Esophagus muscularis mucosa (tissue), 4 donors: ENCODE measurements at regions of chr12 and their contacts with region 1.

Region 1: DNA sequence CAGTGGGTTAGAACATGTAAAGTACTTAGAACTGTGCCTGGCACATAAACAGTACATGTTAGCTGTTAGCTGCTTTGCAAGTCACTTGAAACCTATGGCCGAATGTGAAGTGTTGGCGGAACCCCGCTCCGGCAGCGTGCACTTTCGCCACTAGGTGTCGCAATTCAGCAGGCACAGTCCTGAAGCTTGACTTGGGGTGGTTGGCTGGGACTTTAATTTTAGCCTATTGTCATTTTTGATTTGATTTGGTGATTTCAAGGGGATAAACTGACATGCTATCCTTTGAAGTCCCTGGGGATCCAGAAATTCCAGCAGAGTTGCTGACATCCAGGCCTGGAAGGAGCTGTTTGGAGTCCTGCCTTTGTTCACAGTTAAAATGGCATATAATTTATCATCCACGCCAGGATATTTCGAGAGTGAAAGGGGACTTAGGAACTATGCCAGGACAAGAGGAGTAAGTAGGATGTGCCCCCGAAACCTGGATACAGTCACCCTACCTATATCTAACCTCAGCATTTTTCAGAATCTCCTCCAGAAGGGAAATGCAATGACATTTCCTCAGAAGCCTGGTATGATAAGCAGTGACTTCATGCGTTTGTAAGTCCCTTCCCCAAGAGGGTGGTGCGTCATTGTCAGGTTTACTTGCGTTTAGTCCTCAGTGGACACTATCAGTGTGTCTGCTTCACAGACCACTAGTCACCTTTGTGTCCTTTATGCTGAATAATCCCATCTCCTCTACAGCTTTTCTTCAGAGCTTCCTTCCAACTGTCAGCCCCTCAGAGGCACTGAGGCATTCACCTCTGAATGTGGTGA is 3.5 kb upstream of the TSPAN9 start:
- DNase-seq: peak; percentile 95
- H3K4me3 ChIP-seq: no peak overlapping the region
- H3K27ac ChIP-seq: peak overlapping the region in 1 of 4 donors; percentile 43
- H3K4me1 ChIP-seq: peaks cover 27 to 34% (median 31%) of the 10 kb centered on the region in 4 donors
- H3K27me3 ChIP-seq: no peaks in the 10 kb centered on the region
- CTCF ChIP-seq: peak; percentile 95 to 99 (median 96)
- EP300 ChIP-seq: no peak
- POLR2A ChIP-seq: no peak

Region 2: DNA sequence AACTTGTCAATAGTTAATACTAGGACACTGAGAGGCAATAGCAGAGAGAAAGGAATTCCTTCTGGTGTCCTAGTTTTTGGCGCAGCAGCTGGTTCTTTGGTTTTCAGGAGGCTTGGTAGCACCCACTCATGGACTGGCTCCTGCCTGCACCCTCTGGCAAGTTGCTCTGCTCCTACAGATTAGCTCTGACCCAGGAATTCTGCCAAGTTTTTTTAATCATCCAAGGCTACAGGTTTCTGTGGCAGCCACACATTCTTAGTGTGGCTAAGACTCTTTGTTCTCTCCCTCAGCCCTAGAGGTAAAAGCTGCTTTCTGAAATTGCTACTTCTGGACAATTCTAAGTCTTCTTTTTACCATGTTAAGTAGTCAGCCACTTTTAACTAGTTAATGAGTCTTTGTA is 350.8 kb before region 1 on chr12:
- intact Hi-C with region 1: no loop called
- DNase-seq: no peak
- H3K4me3 ChIP-seq: no peak overlapping the region
- H3K27ac ChIP-seq: no peak overlapping the region
- H3K4me1 ChIP-seq: no peaks in the 10 kb centered on the region
- H3K27me3 ChIP-seq: peaks cover 0 to 13% (median 0%) of the 10 kb centered on the region in 4 donors
- CTCF ChIP-seq: no peak
- EP300 ChIP-seq: no peak
- POLR2A ChIP-seq: no peak

Region 3: DNA sequence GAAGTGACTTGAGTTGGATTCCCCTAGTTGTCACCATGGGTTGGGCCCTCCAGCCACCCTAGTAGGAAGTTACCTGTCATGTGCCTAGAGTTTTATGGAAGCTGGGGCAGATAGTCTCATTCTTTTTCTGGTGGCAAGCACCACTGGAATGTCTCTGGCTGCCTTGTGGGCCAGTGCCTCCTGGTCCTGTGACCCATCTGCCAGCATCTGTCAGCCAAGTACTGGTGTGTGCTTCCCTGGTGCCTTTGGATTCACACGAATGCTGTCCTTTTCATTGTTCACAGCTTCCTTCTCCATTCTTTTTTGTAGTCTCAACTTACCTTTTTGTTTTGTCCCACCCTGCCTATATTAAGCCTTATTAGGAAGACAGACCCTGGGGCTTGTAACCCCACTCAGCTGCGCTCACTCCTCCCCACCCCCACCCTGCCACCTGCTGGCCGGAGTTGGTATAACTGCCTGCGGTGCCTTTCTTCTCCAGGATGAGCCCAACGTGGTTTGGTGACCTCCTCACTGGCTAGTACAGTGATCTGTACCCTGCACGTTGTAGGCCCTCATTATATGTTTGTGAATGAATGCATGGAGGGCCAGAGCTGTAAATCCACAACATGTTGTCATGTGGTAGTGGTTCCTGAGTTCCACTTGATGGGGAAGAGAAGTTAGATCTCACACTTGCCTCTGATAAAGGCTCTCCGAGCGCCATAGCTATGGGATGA is 129.2 kb after region 1 on chr12:
- intact Hi-C with region 1: loop called (anchors 5 kb)
- DNase-seq: no peak
- H3K4me3 ChIP-seq: no peak overlapping the region
- H3K27ac ChIP-seq: no peak overlapping the region
- H3K4me1 ChIP-seq: peaks cover 50 to 69% (median 62%) of the 10 kb centered on the region in 4 donors
- H3K27me3 ChIP-seq: peaks cover 0 to 19% (median 0%) of the 10 kb centered on the region in 4 donors
- CTCF ChIP-seq: peak; percentile 83 to 98 (median 84)
- EP300 ChIP-seq: no peak
- POLR2A ChIP-seq: no peak

Region 4: GRCh38 chr12:3275171-3276041 is 201.8 kb after region 1 on chr12:
- intact Hi-C with region 1: loop called (anchors 2 kb)
- DNase-seq: no peak
- H3K4me3 ChIP-seq: no peak overlapping the region
- H3K27ac ChIP-seq: no peak overlapping the region
- H3K4me1 ChIP-seq: peaks cover 17 to 40% (median 35%) of the 10 kb centered on the region in 4 donors
- H3K27me3 ChIP-seq: no peaks in the 10 kb centered on the region
- CTCF ChIP-seq: peak in 2 of 3 experiments; percentile 94 to 97
- EP300 ChIP-seq: no peak
- POLR2A ChIP-seq: no peak